Tibial artery (tissue), 4 donors: ENCODE measurements at regions of chr16 and their contacts with region 1.

Region 1: GRCh38 chr16:72467157-72467759 is 295.3 kb upstream of the PMFBP1 start:
- DNase-seq: no peak
- H3K4me3 ChIP-seq: no peak overlapping the region
- H3K27ac ChIP-seq: no peak overlapping the region
- H3K4me1 ChIP-seq: no peaks in the 10 kb centered on the region
- H3K27me3 ChIP-seq: no peaks in the 10 kb centered on the region
- CTCF ChIP-seq: peak; percentile 55 to 56

Region 2: DNA sequence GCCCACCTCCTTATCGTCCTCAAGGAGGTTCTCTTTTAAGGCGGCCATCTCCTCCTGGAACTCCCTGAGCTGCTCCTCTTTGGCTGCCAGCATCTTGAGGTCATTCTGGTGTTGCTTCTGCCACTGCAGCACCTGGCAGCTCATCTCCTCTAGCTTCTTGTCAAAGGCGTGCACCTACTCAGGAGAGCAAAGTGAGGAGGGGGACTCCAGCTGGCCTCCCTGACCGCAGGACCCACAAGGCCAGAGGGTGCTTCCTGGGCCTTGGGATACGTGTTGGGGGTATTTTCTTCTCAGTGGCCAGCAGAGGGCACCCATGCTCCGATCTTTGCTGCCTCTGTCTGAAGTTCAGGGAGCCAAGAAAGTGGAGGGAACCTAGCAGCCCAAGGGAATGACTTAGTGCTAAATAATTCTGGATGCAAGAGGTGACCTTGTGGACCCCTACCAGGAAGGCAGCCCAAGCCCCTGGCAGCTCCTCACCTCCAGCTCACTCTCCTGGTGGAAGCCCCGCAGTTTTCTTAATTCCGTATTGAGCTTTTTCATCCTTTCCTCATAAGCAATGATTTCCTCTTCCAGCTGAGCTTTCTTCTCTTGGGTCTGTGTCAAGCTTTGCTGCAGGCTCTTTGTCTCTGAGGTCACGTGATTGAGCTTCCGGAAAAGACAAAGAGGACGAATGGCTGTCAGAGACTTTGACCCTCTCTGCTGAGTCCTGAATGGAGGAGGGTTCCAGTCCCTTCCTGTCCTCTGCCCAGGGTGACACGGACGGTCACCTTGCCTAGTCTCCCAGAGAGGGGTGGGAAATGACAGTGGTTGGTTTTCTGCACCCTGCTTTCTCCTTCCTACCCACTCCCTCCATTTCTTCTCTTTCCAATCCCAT is 342.3 kb before region 1 on chr16:
- intact Hi-C with region 1: loop called (anchors 10 kb)
- DNase-seq: peak in 1 of 2 donors; percentile 84
- H3K4me3 ChIP-seq: no peak overlapping the region
- H3K27ac ChIP-seq: no peak overlapping the region
- H3K4me1 ChIP-seq: no peaks in the 10 kb centered on the region
- H3K27me3 ChIP-seq: no peaks in the 10 kb centered on the region
- CTCF ChIP-seq: peak; percentile 67 to 78

Region 3: GRCh38 chr16:72241930-72242329 is 225.3 kb before region 1 on chr16:
- intact Hi-C with region 1: loop called (anchors 5 kb)
- DNase-seq: no peak
- H3K4me3 ChIP-seq: no peak overlapping the region
- H3K27ac ChIP-seq: no peak overlapping the region
- H3K4me1 ChIP-seq: no peaks in the 10 kb centered on the region
- H3K27me3 ChIP-seq: no peaks in the 10 kb centered on the region
- CTCF ChIP-seq: peak; percentile 72 to 77